HepG2 (cell line): ENCODE measurements at regions of chr18 and their contacts with region 1.

Region 1: DNA sequence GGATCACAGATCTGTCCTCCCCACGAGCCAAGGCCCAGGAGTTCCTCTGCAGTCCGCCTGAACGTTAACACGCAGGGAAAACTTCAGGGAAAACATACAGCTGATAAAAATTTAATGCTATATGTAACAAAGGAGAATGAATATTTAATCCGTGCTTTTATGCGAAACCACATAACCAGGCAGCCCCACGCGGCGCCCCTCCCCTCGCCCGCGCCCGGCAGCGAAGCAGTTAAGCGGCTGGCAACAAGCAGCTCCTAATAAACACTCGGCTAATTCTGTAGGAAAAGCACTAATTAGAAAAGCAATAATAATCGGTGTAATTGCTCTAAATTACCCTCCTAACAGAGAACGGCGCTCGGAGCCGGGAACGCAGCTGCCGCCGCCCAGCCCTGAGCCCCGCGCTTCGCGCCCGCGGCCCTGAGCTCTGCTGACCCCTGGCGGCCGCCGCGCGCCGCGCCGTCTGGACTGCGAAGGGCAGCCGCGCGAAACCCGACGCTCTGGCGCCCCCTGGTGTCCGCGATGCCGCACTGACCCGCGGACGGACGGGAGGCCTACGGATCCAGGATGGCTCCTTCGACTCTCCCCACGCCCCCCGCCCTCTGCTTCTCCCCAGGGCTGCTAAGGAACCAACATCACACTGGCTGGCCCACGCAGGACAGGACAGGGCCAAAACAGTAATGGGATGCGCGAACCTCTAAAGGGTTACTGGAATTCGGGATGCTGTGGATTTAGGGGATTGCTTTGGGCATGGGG is 181.4 kb downstream of the SMAD2 start:
- DNase-seq: peak; percentile 27
- ATAC-seq: peak; percentile 97
- H3K4me3 ChIP-seq: no peak overlapping the region
- H3K27ac ChIP-seq: no peak overlapping the region
- H3K4me1 ChIP-seq: no peaks in the 10 kb centered on the region
- H3K27me3 ChIP-seq: peaks cover 0 to 12% of the 10 kb centered on the region in 2 experiments; a peak in 1 of 5 replicates
- CTCF ChIP-seq: peak; percentile 94
- EP300 ChIP-seq: no peak
- POLR2A ChIP-seq: no peak
- RAD21 ChIP-seq: peak; percentile 99

Region 2: GRCh38 chr18:47215554-47216138 is 533.4 kb before region 1 on chr18:
- CTCF ChIA-PET with region 1: interaction called, 42 read pairs
- POLR2A ChIA-PET with region 1: no interaction called
- in situ Hi-C with region 1: loop called (anchors 5 kb)
- intact Hi-C with region 1: loop called (anchors 1 kb)
- DNase-seq: peak; percentile 44
- ATAC-seq: peak; percentile 69
- H3K4me3 ChIP-seq: no peak overlapping the region
- H3K27ac ChIP-seq: no peak overlapping the region
- H3K4me1 ChIP-seq: no peaks in the 10 kb centered on the region
- H3K27me3 ChIP-seq: peaks cover 0 to 3% of the 10 kb centered on the region in 2 experiments; a peak in 2 of 5 replicates
- CTCF ChIP-seq: peak; percentile 74
- EP300 ChIP-seq: no peak
- POLR2A ChIP-seq: no peak
- RAD21 ChIP-seq: peak; percentile 56

Region 3: GRCh38 chr18:47283476-47283875 is 465.5 kb before region 1 on chr18:
- CTCF ChIA-PET with region 1: interaction called, 4 read pairs
- POLR2A ChIA-PET with region 1: no interaction called
- in situ Hi-C with region 1: no loop called
- intact Hi-C with region 1: loop called (anchors 10 kb)
- DNase-seq: peak; percentile 39
- ATAC-seq: peak; percentile 90
- H3K4me3 ChIP-seq: no peak overlapping the region
- H3K27ac ChIP-seq: no peak overlapping the region
- H3K4me1 ChIP-seq: peaks cover 5% of the 10 kb centered on the region; the same call in 1 of the 2 replicates
- H3K27me3 ChIP-seq: no peaks in the 10 kb centered on the region; a peak in 1 of 5 replicates
- CTCF ChIP-seq: peak; percentile 63
- EP300 ChIP-seq: no peak
- POLR2A ChIP-seq: no peak
- RAD21 ChIP-seq: peak; percentile 28; the same call in 1 of the 2 replicates

Region 4: DNA sequence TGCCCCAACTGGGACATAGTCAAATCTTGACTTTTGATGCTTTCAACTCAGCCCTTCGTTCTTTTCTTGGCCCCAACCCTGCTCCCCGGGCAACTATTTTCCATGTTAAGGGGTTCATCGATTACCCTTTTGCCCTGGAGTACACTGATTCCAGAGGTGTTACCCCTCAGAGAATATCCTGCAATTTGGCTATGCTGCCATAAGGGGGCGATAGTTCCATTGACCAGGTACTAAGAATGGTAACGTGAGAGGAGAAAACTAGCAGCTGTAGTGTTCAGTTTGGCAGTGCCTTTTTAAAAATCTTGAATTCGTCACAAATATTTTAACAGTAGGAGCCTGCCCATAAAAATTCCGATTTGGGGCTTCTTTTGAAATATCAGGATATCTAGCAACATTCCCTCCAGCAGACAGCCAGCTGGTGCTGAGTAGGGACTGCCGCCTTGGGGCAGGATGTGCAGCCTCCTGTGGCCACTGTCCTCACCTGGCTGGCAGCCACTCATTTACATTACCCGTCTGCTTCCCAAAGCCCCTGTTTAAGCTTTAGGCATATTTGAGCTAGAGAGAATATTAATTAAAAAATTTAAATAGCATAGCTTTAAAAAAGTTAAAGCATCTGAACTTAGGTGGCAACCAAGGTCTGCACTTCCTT is 351.2 kb before region 1 on chr18:
- CTCF ChIA-PET with region 1: interaction called, 30 read pairs
- POLR2A ChIA-PET with region 1: no interaction called
- in situ Hi-C with region 1: no loop called
- intact Hi-C with region 1: loop called (anchors 2 kb)
- DNase-seq: peak; percentile 10
- ATAC-seq: peak; percentile 35; the same call in 1 of the 3 replicates
- H3K4me3 ChIP-seq: no peak overlapping the region
- H3K27ac ChIP-seq: no peak overlapping the region
- H3K4me1 ChIP-seq: no peaks in the 10 kb centered on the region
- H3K27me3 ChIP-seq: no peaks in the 10 kb centered on the region
- CTCF ChIP-seq: peak; percentile 59
- EP300 ChIP-seq: no peak
- POLR2A ChIP-seq: no peak
- RAD21 ChIP-seq: no peak

Region 5: DNA sequence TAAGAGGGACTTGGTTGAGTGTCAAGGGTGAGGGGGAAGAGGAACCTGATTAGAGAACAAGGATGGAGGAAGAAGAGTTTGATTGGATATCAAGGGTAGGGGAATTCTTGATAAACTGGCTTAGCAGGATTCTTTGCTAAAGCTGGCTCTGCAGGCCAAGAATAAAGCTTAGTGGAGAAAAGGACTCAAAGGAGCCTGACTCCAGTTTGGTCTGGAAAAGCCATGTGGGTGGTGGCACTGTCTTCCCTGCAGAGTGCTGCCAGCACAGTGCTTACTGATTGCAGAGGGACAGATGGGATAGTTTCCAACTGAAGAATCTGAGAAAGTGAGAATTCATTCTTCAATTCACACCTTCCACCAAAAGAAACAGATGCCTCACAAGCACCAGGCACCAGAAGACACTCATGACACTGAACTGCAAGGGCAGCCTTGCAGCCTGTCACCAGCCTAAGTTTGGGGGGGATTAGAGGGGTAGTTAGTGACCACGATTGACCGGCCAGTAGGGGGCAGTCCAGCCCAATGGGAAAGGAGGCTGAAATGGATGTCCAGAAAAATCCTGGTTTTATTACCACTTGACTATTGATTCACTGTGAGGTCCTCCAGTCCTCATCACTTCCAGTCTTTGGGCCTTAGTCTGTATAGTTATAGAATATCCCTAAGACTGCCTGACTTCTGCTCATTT is 153.1 kb before region 1 on chr18:
- CTCF ChIA-PET with region 1: interaction called, 50 read pairs
- POLR2A ChIA-PET with region 1: no interaction called
- in situ Hi-C with region 1: loop called (anchors 5 kb)
- intact Hi-C with region 1: loop called (anchors 1 kb)
- DNase-seq: peak; percentile 20
- ATAC-seq: peak; percentile 68
- H3K4me3 ChIP-seq: no peak overlapping the region
- H3K27ac ChIP-seq: no peak overlapping the region
- H3K4me1 ChIP-seq: no peaks in the 10 kb centered on the region
- H3K27me3 ChIP-seq: peaks cover 2 to 39% of the 10 kb centered on the region in 2 experiments; a peak in 4 of 5 replicates
- CTCF ChIP-seq: peak; percentile 59
- EP300 ChIP-seq: no peak
- POLR2A ChIP-seq: no peak
- RAD21 ChIP-seq: peak; percentile 34; the same call in 1 of the 2 replicates